GM12878 (cell line): ENCODE measurements at regions of chr2 and their contacts with region 1.

Region 1: GRCh38 chr2:195468771-195469170 is 188.3 kb upstream of the SLC39A10 start:
- DNase-seq: no peak
- ATAC-seq: peak; percentile 91
- H3K4me3 ChIP-seq: no peak overlapping the region
- H3K27ac ChIP-seq: no peak overlapping the region
- H3K4me1 ChIP-seq: peaks cover 38% of the 10 kb centered on the region
- H3K27me3 ChIP-seq: no peaks in the 10 kb centered on the region
- CTCF ChIP-seq: no peak
- EP300 ChIP-seq: peak; percentile 19 to 43; a peak in 1 of 4 replicates
- POLR2A ChIP-seq: no peak
- RAD21 ChIP-seq: no peak

Region 2: DNA sequence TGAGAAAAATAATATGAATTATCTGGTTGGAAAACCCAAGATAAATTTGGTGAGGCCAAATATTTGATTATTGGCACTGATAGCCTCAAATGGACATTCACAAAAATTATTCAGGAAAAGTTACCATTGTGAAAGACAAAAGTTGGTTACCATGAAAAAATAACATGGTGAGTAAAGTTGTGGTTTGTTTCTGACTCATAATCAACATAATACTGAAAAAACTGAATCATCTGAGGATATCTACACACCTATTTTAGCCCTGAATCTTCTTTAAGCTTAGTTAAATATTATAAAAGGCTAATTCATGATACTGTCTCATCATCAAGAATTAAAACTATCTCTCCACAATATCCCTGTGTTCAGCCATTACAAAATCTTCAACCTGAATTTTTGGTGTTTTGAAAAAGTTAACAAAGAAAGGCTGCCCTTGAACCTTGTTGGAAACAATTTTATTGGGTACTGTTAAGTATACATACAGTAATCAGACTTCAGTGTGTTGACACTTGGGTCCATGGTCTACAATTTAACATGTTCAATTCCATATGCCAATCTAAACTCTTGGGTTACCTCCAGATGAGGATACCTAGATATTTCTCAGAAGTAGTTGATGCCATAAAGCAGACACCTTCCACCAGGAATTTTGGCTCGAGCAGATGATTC is 419.3 kb before region 1 on chr2:
- CTCF ChIA-PET with region 1: no interaction called
- POLR2A ChIA-PET with region 1: no interaction called
- RAD21 ChIA-PET with region 1: no interaction called
- SMC1A ChIA-PET with region 1: no interaction called
- in situ Hi-C with region 1: no loop called
- intact Hi-C with region 1: no loop called
- DNase-seq: no peak
- ATAC-seq: peak; percentile 81
- H3K4me3 ChIP-seq: no peak overlapping the region
- H3K27ac ChIP-seq: no peak overlapping the region
- H3K4me1 ChIP-seq: no peaks in the 10 kb centered on the region
- H3K27me3 ChIP-seq: no peaks in the 10 kb centered on the region
- CTCF ChIP-seq: no peak
- EP300 ChIP-seq: peak; percentile 11 to 54; a peak in 1 of 4 replicates
- POLR2A ChIP-seq: no peak
- RAD21 ChIP-seq: no peak

Region 3: DNA sequence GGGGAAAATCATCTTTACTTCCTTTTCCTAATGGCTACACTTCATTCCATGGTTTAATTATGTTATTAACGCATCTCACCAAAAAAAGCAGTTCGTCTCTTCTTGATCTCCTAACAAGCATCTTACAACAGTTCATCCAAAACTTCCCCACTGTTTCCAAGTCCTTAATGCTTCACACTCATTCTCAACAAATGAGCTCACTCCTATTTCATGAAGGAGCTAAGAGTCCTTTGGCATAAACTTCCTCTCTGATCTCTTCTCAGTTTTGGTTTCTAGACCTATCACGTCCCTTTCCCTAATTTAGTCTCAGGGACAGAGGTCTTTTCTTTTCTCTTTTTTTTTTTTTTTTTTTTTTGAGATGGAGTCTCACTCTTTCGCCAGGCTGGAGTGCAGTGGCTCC is 17.6 kb before region 1 on chr2:
- CTCF ChIA-PET with region 1: interaction called, 4 read pairs
- POLR2A ChIA-PET with region 1: interaction called, 3 read pairs
- RAD21 ChIA-PET with region 1: interaction called, 3 read pairs
- SMC1A ChIA-PET with region 1: interaction called, 13 read pairs
- in situ Hi-C with region 1: no loop called
- intact Hi-C with region 1: no loop called
- DNase-seq: no peak
- ATAC-seq: no peak
- H3K4me3 ChIP-seq: no peak overlapping the region
- H3K27ac ChIP-seq: no peak overlapping the region
- H3K4me1 ChIP-seq: peaks cover 6% of the 10 kb centered on the region; the same call in 1 of the 2 replicates
- H3K27me3 ChIP-seq: no peaks in the 10 kb centered on the region
- CTCF ChIP-seq: no peak
- EP300 ChIP-seq: no peak
- POLR2A ChIP-seq: no peak
- RAD21 ChIP-seq: no peak

Region 4: GRCh38 chr2:195482010-195482409 is 13.2 kb after region 1 on chr2:
- CTCF ChIA-PET with region 1: interaction called, 10 read pairs
- POLR2A ChIA-PET with region 1: no interaction called
- RAD21 ChIA-PET with region 1: interaction called, 3 read pairs
- SMC1A ChIA-PET with region 1: interaction called, 7 read pairs
- in situ Hi-C with region 1: no loop called
- intact Hi-C with region 1: no loop called
- DNase-seq: no peak
- ATAC-seq: no peak
- H3K4me3 ChIP-seq: no peak overlapping the region
- H3K27ac ChIP-seq: no peak overlapping the region
- H3K4me1 ChIP-seq: peaks cover 3% of the 10 kb centered on the region; the same call in 1 of the 2 replicates
- H3K27me3 ChIP-seq: no peaks in the 10 kb centered on the region
- CTCF ChIP-seq: no peak
- EP300 ChIP-seq: no peak
- POLR2A ChIP-seq: no peak
- RAD21 ChIP-seq: no peak